B cell (primary cell): ENCODE measurements at regions of chrX and their contacts with region 1.

Region 1: GRCh38 chrX:106894392-106894909 is 8.7 kb downstream of the RIPPLY1 start:
- DNase-seq: peak; percentile 49
- ATAC-seq: peak; percentile 47
- H3K4me3 ChIP-seq: no peak overlapping the region
- H3K4me3 Mint-ChIP-seq: no peak overlapping the region
- H3K27ac ChIP-seq: no peak overlapping the region
- H3K27ac Mint-ChIP-seq: no peak overlapping the region
- H3K4me1 ChIP-seq: no peaks in the 10 kb centered on the region
- H3K4me1 Mint-ChIP-seq: no peaks in the 10 kb centered on the region
- H3K27me3 ChIP-seq: peaks cover 0 to 3% (median 0%) of the 10 kb centered on the region in 4 experiments
- H3K27me3 Mint-ChIP-seq: no peaks in the 10 kb centered on the region
- CTCF ChIP-seq: peak; percentile 73

Region 2: GRCh38 chrX:107429090-107429489 is 534.6 kb after region 1 on chrX:
- CTCF ChIA-PET with region 1: interaction called, 7 read pairs
- POLR2A ChIA-PET with region 1: no interaction called
- intact Hi-C with region 1: loop called (anchors 10 kb)
- DNase-seq: peak; percentile 31
- ATAC-seq: no peak
- H3K4me3 ChIP-seq: no peak overlapping the region
- H3K4me3 Mint-ChIP-seq: no peak overlapping the region
- H3K27ac ChIP-seq: no peak overlapping the region
- H3K27ac Mint-ChIP-seq: no peak overlapping the region
- H3K4me1 ChIP-seq: no peaks in the 10 kb centered on the region
- H3K4me1 Mint-ChIP-seq: no peaks in the 10 kb centered on the region
- H3K27me3 ChIP-seq: no peaks in the 10 kb centered on the region
- H3K27me3 Mint-ChIP-seq: no peaks in the 10 kb centered on the region
- CTCF ChIP-seq: peak; percentile 50

Region 3: GRCh38 chrX:107654872-107655761 is 760.7 kb after region 1 on chrX:
- CTCF ChIA-PET with region 1: no interaction called
- POLR2A ChIA-PET with region 1: no interaction called
- intact Hi-C with region 1: loop called (anchors 10 kb)
- DNase-seq: peak; percentile 74
- ATAC-seq: peak; percentile 85
- H3K4me3 ChIP-seq: no peak overlapping the region
- H3K4me3 Mint-ChIP-seq: no peak overlapping the region
- H3K27ac ChIP-seq: no peak overlapping the region
- H3K27ac Mint-ChIP-seq: peak overlapping the region; percentile 26
- H3K4me1 ChIP-seq: peaks cover 7% of the 10 kb centered on the region in 2 donors
- H3K4me1 Mint-ChIP-seq: peaks cover 9% of the 10 kb centered on the region
- H3K27me3 ChIP-seq: no peaks in the 10 kb centered on the region
- H3K27me3 Mint-ChIP-seq: no peaks in the 10 kb centered on the region
- CTCF ChIP-seq: peak; percentile 78

Region 4: DNA sequence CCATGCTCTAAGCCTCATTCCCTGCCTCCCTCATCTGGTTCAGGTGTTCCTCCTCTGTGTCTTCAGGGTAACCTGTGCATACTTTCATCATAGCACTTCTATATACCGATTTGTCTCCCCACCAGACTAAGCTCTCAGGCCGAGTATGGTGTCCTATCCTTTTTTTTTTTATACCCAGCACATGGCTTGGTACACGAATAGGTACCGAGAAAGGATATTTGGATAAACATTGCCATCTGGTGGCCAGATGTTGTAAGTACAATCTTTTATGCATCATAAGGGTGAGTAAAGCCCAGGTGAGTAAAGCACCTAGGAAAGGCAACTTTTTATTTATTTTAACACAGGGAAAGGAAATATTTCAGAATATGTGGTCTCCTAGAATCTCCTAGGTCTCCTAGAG is 999.6 kb after region 1 on chrX:
- CTCF ChIA-PET with region 1: interaction called, 11 read pairs
- POLR2A ChIA-PET with region 1: no interaction called
- intact Hi-C with region 1: loop called (anchors 1 kb)
- DNase-seq: peak; percentile 59
- ATAC-seq: no peak
- H3K4me3 ChIP-seq: no peak overlapping the region
- H3K4me3 Mint-ChIP-seq: no peak overlapping the region
- H3K27ac ChIP-seq: no peak overlapping the region
- H3K27ac Mint-ChIP-seq: no peak overlapping the region
- H3K4me1 ChIP-seq: no peaks in the 10 kb centered on the region
- H3K4me1 Mint-ChIP-seq: no peaks in the 10 kb centered on the region
- H3K27me3 ChIP-seq: no peaks in the 10 kb centered on the region
- H3K27me3 Mint-ChIP-seq: peaks cover 11% of the 10 kb centered on the region
- CTCF ChIP-seq: peak; percentile 73